Activated CD4-positive, alpha-beta T cell treated with anti-CD3 and anti-CD28 coated beads for 36 hours (primary cell): ENCODE measurements at regions of chr6 and their contacts with region 1.

Region 1: GRCh38 chr6:127302728-127303660 is 36.3 kb downstream of the RNF146 start:
- DNase-seq: peak; percentile 56
- ATAC-seq: peak; percentile 67
- H3K4me3 Mint-ChIP-seq: no peak overlapping the region
- H3K27ac Mint-ChIP-seq: no peak overlapping the region
- H3K4me1 Mint-ChIP-seq: peaks cover 39% of the 10 kb centered on the region
- H3K27me3 Mint-ChIP-seq: no peaks in the 10 kb centered on the region

Region 2: DNA sequence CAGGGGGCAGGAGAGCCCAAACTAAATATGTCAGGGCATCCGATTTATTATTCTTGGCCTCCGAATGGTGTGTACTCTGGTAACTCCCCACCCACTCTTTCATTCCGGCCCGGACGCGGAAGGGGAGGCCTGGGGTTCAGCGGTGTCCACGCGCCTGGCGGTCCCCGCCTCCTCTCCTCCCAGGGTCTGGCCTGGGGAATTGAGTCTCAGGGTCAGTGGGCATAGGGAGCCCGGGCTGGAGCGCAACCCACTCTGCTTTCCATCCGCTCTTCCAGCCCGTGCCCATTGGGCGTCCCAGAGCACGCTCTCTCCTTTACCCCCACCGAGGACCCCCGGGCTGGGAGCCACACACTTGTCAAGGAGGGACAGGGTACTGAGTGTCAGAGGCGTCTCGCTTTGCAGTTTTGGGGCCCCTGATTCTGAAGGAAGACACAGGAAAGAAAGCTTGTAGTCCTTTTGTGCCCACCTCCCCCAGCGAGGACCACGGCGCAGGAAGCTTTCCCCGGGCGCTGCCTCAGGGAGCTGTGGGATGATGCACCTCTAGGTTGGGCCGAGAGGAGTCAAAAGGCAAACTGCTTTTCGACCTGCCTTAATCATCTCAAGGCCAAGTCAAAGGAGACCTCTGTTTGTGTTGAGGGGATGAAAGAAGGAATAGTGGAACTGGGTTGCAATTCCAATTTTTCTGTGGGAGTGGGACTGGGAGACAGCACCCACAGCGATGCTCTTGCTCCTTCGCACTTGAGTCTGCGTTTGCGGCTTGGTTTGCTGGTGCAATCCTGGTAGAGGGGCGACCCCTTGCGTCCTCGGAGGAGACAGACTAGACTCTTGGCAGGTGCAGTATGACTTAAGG is 182.0 kb before region 1 on chr6:
- CTCF ChIA-PET with region 1: no interaction called
- POLR2A ChIA-PET with region 1: no interaction called
- intact Hi-C with region 1: no loop called
- DNase-seq: peak; percentile 89
- ATAC-seq: peak; percentile 90
- H3K4me3 Mint-ChIP-seq: no peak overlapping the region
- H3K27ac Mint-ChIP-seq: no peak overlapping the region
- H3K4me1 Mint-ChIP-seq: peaks cover 19% of the 10 kb centered on the region
- H3K27me3 Mint-ChIP-seq: peaks cover 48% of the 10 kb centered on the region

Region 3: DNA sequence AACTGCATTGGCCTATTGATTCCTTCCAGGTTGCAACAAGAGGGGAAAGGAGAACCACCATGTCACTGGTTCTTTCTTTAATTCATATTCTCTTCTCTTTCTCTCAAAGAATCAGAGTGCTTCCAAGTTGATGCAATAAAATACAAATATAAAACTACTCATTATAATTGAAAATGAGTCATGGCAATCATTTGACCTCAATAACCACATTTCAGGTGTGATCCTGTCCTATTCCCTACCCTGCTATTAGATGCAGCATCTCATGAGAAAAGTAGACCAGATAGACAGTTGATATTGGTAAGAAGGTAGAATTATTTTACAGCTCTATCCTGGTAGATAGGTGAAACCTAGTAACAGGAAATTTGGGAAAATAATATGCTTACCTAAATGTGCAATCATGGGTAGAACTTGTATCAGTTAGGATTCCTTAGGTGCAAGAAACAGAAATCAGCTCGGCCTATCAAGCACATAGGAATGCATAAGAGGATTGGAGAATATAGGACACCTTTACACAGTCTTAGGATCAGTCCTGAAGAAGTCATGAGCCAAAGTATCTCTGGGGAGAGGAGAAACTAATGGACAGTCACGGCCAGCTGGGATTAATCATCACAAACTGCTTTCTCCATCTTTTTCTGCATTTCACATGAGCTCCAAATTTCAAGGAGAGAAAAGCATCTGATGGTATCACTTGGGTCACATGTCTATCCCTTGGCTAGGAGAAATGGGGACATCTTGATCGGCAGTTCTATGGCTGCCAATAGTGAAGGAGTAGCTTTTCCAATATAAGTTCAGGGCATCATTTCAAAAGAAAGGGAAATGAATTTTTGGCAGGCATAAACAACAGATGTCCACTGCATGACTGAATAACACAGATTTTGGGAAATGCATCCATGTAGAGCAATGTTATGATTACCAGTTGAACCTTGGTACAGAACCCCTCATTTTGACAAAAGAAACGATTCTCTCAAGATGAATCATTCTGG is 55.6 kb before region 1 on chr6:
- CTCF ChIA-PET with region 1: no interaction called
- POLR2A ChIA-PET with region 1: no interaction called
- intact Hi-C with region 1: no loop called
- DNase-seq: no peak
- ATAC-seq: no peak
- H3K4me3 Mint-ChIP-seq: no peak overlapping the region
- H3K27ac Mint-ChIP-seq: no peak overlapping the region
- H3K4me1 Mint-ChIP-seq: no peaks in the 10 kb centered on the region
- H3K27me3 Mint-ChIP-seq: peaks cover 2% of the 10 kb centered on the region

Region 4: GRCh38 chr6:127291495-127291894 is 11.5 kb before region 1 on chr6:
- CTCF ChIA-PET with region 1: interaction called, 47 read pairs
- POLR2A ChIA-PET with region 1: no interaction called
- intact Hi-C with region 1: no loop called
- DNase-seq: no peak
- ATAC-seq: peak; percentile 71
- H3K4me3 Mint-ChIP-seq: peak overlapping the region; percentile 11
- H3K27ac Mint-ChIP-seq: no peak overlapping the region
- H3K4me1 Mint-ChIP-seq: peaks cover 45% of the 10 kb centered on the region
- H3K27me3 Mint-ChIP-seq: no peaks in the 10 kb centered on the region

Region 5: GRCh38 chr6:127464881-127465459 is 162.0 kb after region 1 on chr6:
- CTCF ChIA-PET with region 1: interaction called, 7 read pairs
- POLR2A ChIA-PET with region 1: no interaction called
- intact Hi-C with region 1: loop called (anchors 1 to 2 kb)
- DNase-seq: peak; percentile 84
- ATAC-seq: peak; percentile 82
- H3K4me3 Mint-ChIP-seq: no peak overlapping the region
- H3K27ac Mint-ChIP-seq: no peak overlapping the region
- H3K4me1 Mint-ChIP-seq: no peaks in the 10 kb centered on the region
- H3K27me3 Mint-ChIP-seq: peaks cover 2% of the 10 kb centered on the region

Region 6: DNA sequence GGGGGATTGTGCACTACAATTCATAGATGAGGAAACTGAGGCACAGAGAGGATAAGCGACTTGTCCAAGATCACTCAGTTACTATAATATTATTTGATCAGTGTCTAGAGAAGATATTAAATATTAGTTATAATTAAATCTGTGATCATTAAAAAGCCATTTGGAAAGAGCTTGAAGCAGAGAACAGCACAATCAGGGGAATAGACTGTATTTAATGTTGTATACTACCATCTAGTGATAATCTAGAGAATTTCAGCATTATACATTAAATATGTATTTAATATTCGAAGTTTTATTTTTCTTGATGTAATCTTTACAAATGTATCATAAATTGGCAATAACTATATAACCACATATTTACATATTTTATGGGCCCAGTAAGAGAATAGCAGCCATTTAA is 236.3 kb after region 1 on chr6:
- CTCF ChIA-PET with region 1: interaction called, 16 read pairs
- POLR2A ChIA-PET with region 1: no interaction called
- intact Hi-C with region 1: loop called (anchors 1 kb)
- DNase-seq: no peak
- ATAC-seq: peak; percentile 57
- H3K4me3 Mint-ChIP-seq: no peak overlapping the region
- H3K27ac Mint-ChIP-seq: no peak overlapping the region
- H3K4me1 Mint-ChIP-seq: peaks cover 2% of the 10 kb centered on the region
- H3K27me3 Mint-ChIP-seq: peaks cover 15% of the 10 kb centered on the region

Region 7: GRCh38 chr6:127641905-127642304 is 338.9 kb after region 1 on chr6:
- CTCF ChIA-PET with region 1: interaction called, 3 read pairs
- POLR2A ChIA-PET with region 1: no interaction called
- intact Hi-C with region 1: loop called in 1 of 2 experiments (anchors 10 kb)
- DNase-seq: peak; percentile 14
- ATAC-seq: no peak
- H3K4me3 Mint-ChIP-seq: no peak overlapping the region
- H3K27ac Mint-ChIP-seq: no peak overlapping the region
- H3K4me1 Mint-ChIP-seq: no peaks in the 10 kb centered on the region
- H3K27me3 Mint-ChIP-seq: peaks cover 4% of the 10 kb centered on the region